Activated B cell treated with CpG ODN at 0.5 μM for 24 hours (primary cell): ENCODE measurements at regions of chr4 and their contacts with region 1.

Region 1: DNA sequence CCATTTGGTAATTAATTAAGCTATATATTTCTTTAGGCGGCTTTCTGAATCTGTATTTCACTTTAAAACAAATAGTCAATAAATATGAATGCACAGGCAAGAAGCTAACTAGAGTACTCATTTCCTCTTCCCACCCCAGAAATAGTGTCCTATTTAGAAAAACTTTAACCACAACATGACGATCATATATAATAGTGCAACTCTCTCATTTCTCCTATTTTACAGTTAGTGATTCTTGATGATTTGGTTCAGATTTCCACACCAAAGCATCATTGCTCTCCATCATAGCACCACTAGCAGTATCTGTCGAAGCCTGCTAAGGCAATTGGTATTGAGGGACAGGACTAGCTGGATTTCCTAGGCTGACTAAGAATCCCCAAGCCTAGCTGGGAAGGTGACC is 184.0 kb upstream of the GALNTL6 start:
- DNase-seq: no peak
- ATAC-seq: peak; percentile 61
- H3K4me3 Mint-ChIP-seq: peak overlapping the region; percentile 29
- H3K27ac Mint-ChIP-seq: no peak overlapping the region
- H3K4me1 Mint-ChIP-seq: peaks cover 17% of the 10 kb centered on the region
- H3K27me3 Mint-ChIP-seq: no peaks in the 10 kb centered on the region
- CTCF ChIP-seq: no peak

Region 2: GRCh38 chr4:171667906-171668305 is 38.7 kb after region 1 on chr4:
- CTCF ChIA-PET with region 1: no interaction called
- POLR2A ChIA-PET with region 1: no interaction called
- intact Hi-C with region 1: no loop called
- DNase-seq: no peak
- ATAC-seq: no peak
- H3K4me3 Mint-ChIP-seq: no peak overlapping the region
- H3K27ac Mint-ChIP-seq: no peak overlapping the region
- H3K4me1 Mint-ChIP-seq: no peaks in the 10 kb centered on the region
- H3K27me3 Mint-ChIP-seq: no peaks in the 10 kb centered on the region
- CTCF ChIP-seq: no peak

Region 3: DNA sequence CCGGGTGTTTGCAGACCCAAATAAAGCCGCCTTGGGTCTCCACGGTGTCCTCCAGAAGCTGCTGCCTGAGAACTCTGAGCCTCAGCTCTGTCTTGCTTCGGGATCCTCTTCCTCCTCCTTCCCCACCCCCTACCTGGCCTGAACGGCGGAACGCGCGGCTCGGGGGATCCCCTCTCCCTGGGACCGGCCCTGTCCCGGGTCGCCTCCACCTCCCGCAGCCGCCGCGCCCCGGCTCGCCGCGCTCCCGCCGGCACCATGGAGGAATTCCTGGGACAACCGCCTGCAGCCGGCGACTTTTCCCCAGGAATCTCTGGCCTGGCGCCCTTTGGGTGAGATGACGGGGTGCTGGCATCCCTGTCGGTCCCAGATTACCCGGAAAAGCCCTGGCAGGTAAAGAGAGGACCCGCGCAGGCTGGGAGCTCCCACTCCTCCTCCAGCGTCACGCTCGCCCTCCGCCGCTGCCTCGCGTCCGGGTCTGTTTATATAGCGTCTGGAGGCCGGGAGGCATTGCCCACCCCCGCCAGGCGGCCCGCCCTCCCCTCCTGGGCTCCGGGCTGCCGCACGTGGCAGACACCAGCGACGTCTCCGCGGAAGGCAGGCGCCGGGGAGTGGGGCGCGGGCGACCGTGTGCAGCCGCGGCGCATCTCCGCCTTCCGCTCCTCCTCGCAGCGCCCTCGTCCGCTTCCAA is 183.8 kb after region 1 on chr4 and contains the start of gene GALNTL6:
- CTCF ChIA-PET with region 1: no interaction called
- POLR2A ChIA-PET with region 1: no interaction called
- intact Hi-C with region 1: loop called (anchors 5 kb)
- DNase-seq: peak; percentile 16
- ATAC-seq: peak; percentile 65
- H3K4me3 Mint-ChIP-seq: peak within 1 kb of the TSS; percentile 82
- H3K27ac Mint-ChIP-seq: peak within 1 kb of the TSS; percentile 43
- H3K4me1 Mint-ChIP-seq: peaks cover 31% of the 10 kb centered on the region
- H3K27me3 Mint-ChIP-seq: peaks cover 26% of the 10 kb centered on the region
- CTCF ChIP-seq: no peak
- total RNA-seq, gene GALNTL6: 0.20 and 0.24 TPM in 2 replicates